AG04449 (cell line): ENCODE measurements at regions of chr16 and their contacts with region 1.

Region 1: DNA sequence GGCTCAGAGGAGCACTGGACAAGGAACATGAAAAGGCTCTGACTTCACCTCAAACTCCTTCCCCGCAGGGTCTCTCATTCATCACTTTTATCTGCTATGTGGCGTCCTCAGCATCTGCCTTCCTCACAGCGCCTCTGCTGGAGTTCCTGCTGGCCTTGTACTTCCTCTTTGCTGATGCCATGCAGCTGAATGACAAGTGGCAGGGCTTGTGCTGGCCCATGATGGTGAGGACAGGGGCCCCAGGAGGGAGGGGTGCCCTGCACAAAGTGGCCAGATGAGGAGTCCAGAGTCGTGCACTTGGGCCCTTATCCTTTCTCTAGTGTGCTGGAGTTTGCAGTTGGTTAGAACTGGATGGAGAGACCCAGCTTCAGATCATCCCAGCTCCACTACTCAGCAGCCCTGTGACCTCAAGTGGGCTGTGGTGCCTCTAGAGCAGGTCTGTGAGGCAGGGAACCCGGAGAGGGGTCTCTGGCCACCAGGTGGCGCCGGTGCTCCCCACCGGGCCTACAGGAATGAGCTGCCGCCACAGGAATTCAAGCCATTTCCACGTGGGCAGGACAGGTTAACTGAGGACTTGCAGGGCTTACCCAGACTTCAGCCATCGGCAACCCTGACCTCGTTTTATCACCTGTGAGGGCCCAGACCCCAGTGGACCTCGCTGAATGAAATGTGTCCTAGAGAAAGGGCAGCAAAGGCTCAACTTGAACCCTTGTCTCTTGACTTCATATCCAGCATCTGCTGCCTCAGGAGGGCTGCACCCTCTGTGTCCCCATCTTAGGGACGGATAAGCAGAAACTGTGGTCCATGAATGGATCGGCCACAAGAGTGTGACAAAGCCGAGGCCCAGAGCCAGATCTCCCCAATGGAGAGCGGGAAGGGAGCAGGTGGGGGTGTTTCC is 4.0 kb downstream of the CMTM3 start:
- DNase-seq: peak; percentile 51
- H3K4me3 ChIP-seq: no peak overlapping the region
- CTCF ChIP-seq: peak; percentile 95

Region 2: GRCh38 chr16:66562407-66562806 is 46.1 kb before region 1 on chr16:
- CTCF ChIA-PET with region 1: interaction called, 15 read pairs
- POLR2A ChIA-PET with region 1: interaction called, 3 read pairs
- DNase-seq: no peak
- H3K4me3 ChIP-seq: no peak overlapping the region
- CTCF ChIP-seq: no peak

Region 3: GRCh38 chr16:66596986-66597848 is 11.3 kb before region 1 on chr16:
- CTCF ChIA-PET with region 1: interaction called, 12 read pairs
- POLR2A ChIA-PET with region 1: no interaction called
- DNase-seq: no peak
- H3K4me3 ChIP-seq: no peak overlapping the region
- CTCF ChIP-seq: no peak

Region 4: DNA sequence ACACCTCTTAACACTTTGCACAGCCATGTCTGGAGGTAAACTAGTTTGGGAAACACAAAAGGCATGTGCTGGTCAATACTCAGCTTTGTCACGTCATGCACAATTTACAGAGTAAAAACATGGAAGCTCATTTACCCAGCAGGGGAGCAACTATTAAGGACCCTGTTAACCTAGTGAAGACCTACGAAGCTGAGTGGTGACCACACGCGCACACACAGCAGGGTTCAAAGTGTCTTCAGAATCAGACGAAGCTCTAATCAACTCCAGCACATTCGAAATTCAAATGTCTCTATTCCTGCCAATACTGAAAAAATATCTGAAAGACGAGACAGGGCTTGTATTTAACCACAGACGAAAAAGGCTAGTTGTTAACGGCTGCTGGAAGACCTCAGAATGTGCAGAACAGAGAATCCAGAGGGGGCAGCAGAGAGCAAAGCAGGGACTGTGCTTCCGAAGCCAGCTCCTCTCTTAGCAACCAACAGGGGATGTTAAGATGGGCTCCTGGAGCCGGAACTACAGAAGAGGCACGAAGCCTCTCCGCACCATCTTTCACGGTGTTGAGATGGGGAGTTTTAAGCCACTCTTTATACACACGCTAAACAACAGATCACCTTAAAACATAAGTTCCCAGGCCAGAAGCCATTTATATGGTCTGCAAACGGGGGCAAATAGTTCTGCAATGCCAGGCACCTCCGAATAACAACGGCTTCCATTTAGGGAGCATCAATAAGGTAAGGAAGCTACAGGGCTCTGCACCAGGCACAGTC is 42.4 kb after region 1 on chr16:
- CTCF ChIA-PET with region 1: interaction called, 34 read pairs
- POLR2A ChIA-PET with region 1: interaction called, 3 read pairs
- DNase-seq: peak; percentile 12
- H3K4me3 ChIP-seq: peak overlapping the region; percentile 0; the same call in 1 of the 2 replicates
- CTCF ChIP-seq: peak; percentile 90

Region 5: DNA sequence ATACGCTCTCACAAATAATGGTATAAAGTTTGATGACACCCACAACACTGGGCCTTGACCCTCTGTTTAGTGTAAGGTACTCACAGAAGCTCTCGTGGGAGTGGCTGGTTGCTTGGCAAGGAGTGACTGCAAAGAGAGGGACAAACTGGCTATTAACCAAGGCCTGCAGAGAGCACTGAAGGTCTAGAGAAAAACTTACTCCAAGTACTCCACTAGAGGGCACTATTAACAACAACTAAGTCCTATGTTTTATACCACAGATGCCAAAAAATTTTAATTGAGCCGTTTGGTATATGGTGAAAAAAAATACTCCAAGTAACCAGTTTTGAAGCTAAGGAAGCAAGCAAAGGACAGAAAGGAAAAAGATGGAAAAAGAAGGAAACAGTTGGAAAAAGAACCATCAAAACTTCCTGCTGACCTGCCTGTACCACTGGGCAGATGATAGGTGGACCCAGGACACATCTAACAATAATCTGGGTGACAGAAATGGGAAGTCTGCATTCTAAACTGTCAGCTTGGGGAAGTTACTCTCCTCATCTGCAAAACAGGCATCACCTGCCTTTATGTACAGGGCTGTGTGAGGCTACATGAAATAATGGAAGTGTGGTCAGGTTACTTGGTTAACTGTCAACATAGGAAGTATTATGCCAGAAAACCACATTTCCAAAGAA is 119.8 kb after region 1 on chr16:
- CTCF ChIA-PET with region 1: interaction called, 29 read pairs
- POLR2A ChIA-PET with region 1: no interaction called
- DNase-seq: no peak
- H3K4me3 ChIP-seq: no peak overlapping the region
- CTCF ChIP-seq: peak; percentile 51

Region 6: GRCh38 chr16:66872943-66873684 is 264.6 kb after region 1 on chr16:
- CTCF ChIA-PET with region 1: interaction called, 72 read pairs
- POLR2A ChIA-PET with region 1: no interaction called
- DNase-seq: peak; percentile 95
- H3K4me3 ChIP-seq: peak overlapping the region; percentile 51
- CTCF ChIP-seq: peak; percentile 99